Thyroid gland (tissue), 4 donors: ENCODE measurements at regions of chr22 and their contacts with region 1.

Region 1: DNA sequence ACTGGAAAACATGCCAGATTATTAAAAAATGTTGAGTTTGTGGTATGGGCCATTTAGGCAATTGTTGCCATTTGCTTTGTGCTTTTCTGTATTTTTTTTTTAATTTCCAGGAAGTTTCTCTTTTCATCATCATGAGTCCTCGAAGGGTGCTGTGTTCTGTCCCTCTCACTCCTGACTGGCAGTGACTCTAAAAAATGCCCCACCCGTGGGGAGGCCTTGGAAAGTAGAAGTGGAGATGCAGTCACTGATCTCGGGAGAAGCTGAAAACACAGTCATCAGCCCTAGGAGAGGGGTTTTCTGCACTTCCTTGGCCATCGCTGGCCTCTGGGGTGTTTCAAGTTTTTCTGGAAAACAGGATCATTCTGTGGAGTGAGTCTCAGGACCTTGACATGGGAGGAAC is 98.5 kb upstream of the GRK3 start:
- DNase-seq: no peak
- H3K4me3 ChIP-seq: no peak overlapping the region
- H3K27ac ChIP-seq: no peak overlapping the region
- H3K4me1 ChIP-seq: no peaks in the 10 kb centered on the region
- H3K27me3 ChIP-seq: no peaks in the 10 kb centered on the region
- CTCF ChIP-seq: no peak
- POLR2A ChIP-seq: no peak

Region 2: GRCh38 chr22:25702040-25702439 is 236.1 kb after region 1 on chr22:
- intact Hi-C with region 1: loop called (anchors 10 kb)
- DNase-seq: no peak
- H3K4me3 ChIP-seq: no peak overlapping the region
- H3K27ac ChIP-seq: no peak overlapping the region
- H3K4me1 ChIP-seq: no peaks in the 10 kb centered on the region
- H3K27me3 ChIP-seq: no peaks in the 10 kb centered on the region
- CTCF ChIP-seq: peak in 3 of 6 experiments; percentile 39 to 66 (median 51)
- POLR2A ChIP-seq: no peak

Region 3: GRCh38 chr22:25772288-25772687 is 306.3 kb after region 1 on chr22:
- intact Hi-C with region 1: loop called (anchors 2 kb)
- DNase-seq: no peak
- H3K4me3 ChIP-seq: no peak overlapping the region
- H3K27ac ChIP-seq: no peak overlapping the region
- H3K4me1 ChIP-seq: no peaks in the 10 kb centered on the region
- H3K27me3 ChIP-seq: no peaks in the 10 kb centered on the region
- CTCF ChIP-seq: no peak
- POLR2A ChIP-seq: no peak